ENCODE measurements at regions of chr15 and their contacts with region 1.

Region 1: GRCh38 chr15:58933281-58934113 is at the start of gene SLTM:
- DNase-seq: peak; percentile 85 to 94
- ATAC-seq: peak; percentile 87
- H3K4me3 ChIP-seq: peak within 1 kb of the TSS; percentile 73 to 95 (median 76)
- H3K27ac ChIP-seq: peak within 1 kb of the TSS; percentile 93 to 99 (median 96)
- H3K4me1 ChIP-seq: peaks cover 13 to 26% of the 10 kb centered on the region in 2 donors
- H3K27me3 ChIP-seq: no peaks in the 10 kb centered on the region
- CTCF ChIP-seq: peak in 4 of 5 experiments; percentile 13 to 43 (median 37)
- POLR2A ChIP-seq: peak; percentile 94 to 97
- total RNA-seq, gene SLTM: 46.5 to 76.2 (median 60.9) TPM

Region 2: DNA sequence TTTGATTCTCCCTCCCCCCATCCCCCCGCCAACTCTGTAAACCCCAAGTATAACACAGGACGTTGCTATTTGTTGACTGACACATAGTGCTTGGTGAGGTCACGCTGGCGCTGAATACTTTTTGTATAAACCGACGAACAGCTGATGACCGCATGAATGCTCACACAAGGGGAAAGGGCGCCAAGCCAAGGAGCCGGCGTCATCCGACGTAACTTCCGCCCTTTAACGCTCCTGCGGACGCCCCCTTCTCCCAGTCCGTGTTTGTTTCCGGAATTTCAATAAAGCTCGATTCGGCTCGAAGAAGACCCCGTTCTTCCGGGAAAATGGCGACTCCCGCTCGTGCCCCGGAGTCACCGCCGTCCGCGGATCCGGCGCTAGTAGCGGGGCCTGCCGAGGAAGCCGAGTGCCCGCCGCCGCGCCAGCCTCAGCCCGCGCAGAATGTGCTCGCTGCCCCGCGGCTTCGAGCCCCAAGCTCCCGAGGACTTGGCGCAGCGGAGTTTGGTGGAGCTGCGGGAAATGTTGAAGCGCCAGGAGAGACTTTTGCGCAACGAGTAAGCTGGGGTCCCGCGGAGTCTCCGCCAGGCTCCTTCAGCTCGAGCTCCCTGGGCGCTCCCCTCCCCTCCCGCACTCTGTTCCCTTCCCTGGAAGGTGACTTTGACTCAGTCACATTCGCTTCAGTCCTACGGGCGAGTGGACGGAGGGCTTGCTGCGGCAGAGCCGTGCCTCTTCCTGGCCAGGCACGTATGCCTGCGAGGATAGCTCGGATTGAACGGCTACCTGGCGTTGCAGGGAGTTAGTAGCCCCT is 1226.9 kb before region 1 on chr15 and contains the start of gene POLR2M:
- in situ Hi-C with region 1: no loop called
- intact Hi-C with region 1: loop called (anchors 5 kb)
- DNase-seq: peak; percentile 88 to 95
- ATAC-seq: peak; percentile 94 to 97
- H3K4me3 ChIP-seq: peak within 1 kb of the TSS; percentile 69 to 97 (median 88)
- H3K27ac ChIP-seq: peak within 1 kb of the TSS; percentile 90 to 96 (median 94)
- H3K4me1 ChIP-seq: peaks cover 28% of the 10 kb centered on the region in 2 donors
- H3K27me3 ChIP-seq: no peaks in the 10 kb centered on the region
- CTCF ChIP-seq: no peak
- POLR2A ChIP-seq: peak; percentile 77 to 80
- total RNA-seq, gene POLR2M: 40.3 to 145 (median 79.5) TPM

Region 3: GRCh38 chr15:58715266-58715917 is 218.1 kb before region 1 on chr15:
- in situ Hi-C with region 1: no loop called
- intact Hi-C with region 1: no loop called
- DNase-seq: no peak
- ATAC-seq: no peak
- H3K4me3 ChIP-seq: no peak overlapping the region
- H3K27ac ChIP-seq: no peak overlapping the region
- H3K4me1 ChIP-seq: no peaks in the 10 kb centered on the region
- H3K27me3 ChIP-seq: no peaks in the 10 kb centered on the region
- CTCF ChIP-seq: no peak
- POLR2A ChIP-seq: no peak

Measured in gastrocnemius medialis (tissue), 4 donors.